ENCODE measurements at regions of chr12 and their contacts with region 1.

Region 1: GRCh38 chr12:12696562-12697383 is 790 bp upstream of the GPR19 start:
- DNase-seq: peak; percentile 96
- H3K4me3 Mint-ChIP-seq: peak overlapping the region; percentile 81
- H3K27ac Mint-ChIP-seq: peak overlapping the region; percentile 100
- H3K4me1 Mint-ChIP-seq: peaks cover 66% of the 10 kb centered on the region
- H3K27me3 Mint-ChIP-seq: no peaks in the 10 kb centered on the region

Region 2: DNA sequence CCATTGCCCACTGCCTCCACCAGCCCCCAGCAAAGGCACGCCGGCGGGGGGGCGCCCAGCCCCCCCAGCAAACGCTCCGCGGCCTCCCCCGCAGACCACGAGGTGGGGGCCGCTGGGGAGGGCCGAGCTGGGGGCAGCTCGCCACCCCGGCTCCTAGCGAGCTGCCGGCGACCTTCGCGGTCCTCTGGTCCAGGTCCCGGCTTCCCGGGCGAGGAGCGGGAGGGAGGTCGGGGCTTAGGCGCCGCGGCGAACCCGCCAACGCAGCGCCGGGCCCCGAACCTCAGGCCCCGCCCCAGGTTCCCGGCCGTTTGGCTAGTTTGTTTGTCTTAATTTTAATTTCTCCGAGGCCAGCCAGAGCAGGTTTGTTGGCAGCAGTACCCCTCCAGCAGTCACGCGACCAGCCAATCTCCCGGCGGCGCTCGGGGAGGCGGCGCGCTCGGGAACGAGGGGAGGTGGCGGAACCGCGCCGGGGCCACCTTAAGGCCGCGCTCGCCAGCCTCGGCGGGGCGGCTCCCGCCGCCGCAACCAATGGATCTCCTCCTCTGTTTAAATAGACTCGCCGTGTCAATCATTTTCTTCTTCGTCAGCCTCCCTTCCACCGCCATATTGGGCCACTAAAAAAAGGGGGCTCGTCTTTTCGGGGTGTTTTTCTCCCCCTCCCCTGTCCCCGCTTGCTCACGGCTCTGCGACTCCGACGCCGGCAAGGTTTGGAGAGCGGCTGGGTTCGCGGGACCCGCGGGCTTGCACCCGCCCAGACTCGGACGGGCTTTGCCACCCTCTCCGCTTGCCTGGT is 20.2 kb after region 1 on chr12 and contains the start of gene CDKN1B:
- CTCF ChIA-PET with region 1: interaction called, 7 read pairs
- POLR2A ChIA-PET with region 1: interaction called, 24 read pairs
- DNase-seq: peak; percentile 91
- H3K4me3 Mint-ChIP-seq: peak within 1 kb of the TSS; percentile 97
- H3K27ac Mint-ChIP-seq: peak within 1 kb of the TSS; percentile 99
- H3K4me1 Mint-ChIP-seq: peaks cover 40% of the 10 kb centered on the region
- H3K27me3 Mint-ChIP-seq: no peaks in the 10 kb centered on the region
- total RNA-seq, gene CDKN1B: 105 to 117 TPM

Region 3: GRCh38 chr12:12724661-12725545 is 28.1 kb after region 1 on chr12:
- CTCF ChIA-PET with region 1: interaction called, 8 read pairs
- POLR2A ChIA-PET with region 1: interaction called, 10 read pairs
- DNase-seq: peak; percentile 93
- H3K4me3 Mint-ChIP-seq: peak overlapping the region; percentile 95
- H3K27ac Mint-ChIP-seq: peak overlapping the region; percentile 98
- H3K4me1 Mint-ChIP-seq: peaks cover 28% of the 10 kb centered on the region
- H3K27me3 Mint-ChIP-seq: no peaks in the 10 kb centered on the region

Region 4: GRCh38 chr12:12745576-12746211 is 48.9 kb after region 1 on chr12:
- CTCF ChIA-PET with region 1: no interaction called
- POLR2A ChIA-PET with region 1: no interaction called
- DNase-seq: no peak
- H3K4me3 Mint-ChIP-seq: no peak overlapping the region
- H3K27ac Mint-ChIP-seq: no peak overlapping the region
- H3K4me1 Mint-ChIP-seq: peaks cover 33% of the 10 kb centered on the region
- H3K27me3 Mint-ChIP-seq: no peaks in the 10 kb centered on the region